ENCODE measurements at regions of chrX and their contacts with region 1.

Region 1: DNA sequence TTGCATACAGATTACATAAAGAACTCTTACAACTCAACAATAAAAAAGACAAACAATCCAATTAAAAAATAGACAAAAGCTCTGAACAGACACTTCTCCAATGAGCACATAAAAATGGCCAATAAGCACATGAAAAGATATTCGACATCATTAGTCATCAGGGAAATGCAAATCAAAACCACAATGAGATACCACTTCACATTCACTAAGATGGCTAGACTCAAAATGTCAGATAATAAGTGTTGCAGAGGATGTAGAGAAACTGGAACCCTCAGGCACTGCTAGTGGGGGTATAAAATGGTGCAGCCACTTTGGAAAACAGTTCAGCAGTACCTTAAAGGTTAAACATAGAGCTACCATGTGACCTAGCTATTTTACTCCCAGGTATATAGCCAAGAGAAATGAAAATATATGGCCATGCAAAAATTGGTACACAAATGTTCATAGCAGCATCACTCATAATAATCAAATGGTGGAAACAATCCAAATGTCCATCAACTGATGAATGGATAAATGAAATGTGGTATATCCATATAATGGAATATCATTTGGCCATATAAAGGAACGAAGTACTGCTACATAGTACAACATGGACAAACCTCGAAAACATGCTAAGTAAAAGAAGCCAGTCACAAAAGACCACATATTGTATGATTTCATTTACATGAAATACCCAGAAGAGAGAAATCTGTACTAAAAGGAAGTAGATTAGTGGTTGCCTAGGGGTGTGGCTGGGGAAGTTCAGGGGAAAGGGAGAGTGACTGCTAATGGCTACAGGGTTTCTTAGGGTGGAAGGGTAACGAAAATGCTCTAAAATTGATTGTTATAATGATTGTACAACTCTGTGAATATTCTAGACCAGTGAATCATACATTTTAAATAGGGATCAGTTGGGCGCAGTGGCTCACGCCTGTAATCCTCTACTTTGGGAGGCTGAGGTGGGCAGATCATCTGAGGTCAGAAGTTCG is 29.4 kb downstream of the SASH3 start:
- DNase-seq: no peak
- H3K4me3 ChIP-seq: no peak overlapping the region
- CTCF ChIP-seq: no peak

Region 2: GRCh38 chrX:129823115-129823514 is 14.0 kb after region 1 on chrX:
- CTCF ChIA-PET with region 1: interaction called, 10 read pairs
- POLR2A ChIA-PET with region 1: no interaction called
- DNase-seq: no peak
- H3K4me3 ChIP-seq: no peak overlapping the region
- CTCF ChIP-seq: peak; percentile 23

Region 3: DNA sequence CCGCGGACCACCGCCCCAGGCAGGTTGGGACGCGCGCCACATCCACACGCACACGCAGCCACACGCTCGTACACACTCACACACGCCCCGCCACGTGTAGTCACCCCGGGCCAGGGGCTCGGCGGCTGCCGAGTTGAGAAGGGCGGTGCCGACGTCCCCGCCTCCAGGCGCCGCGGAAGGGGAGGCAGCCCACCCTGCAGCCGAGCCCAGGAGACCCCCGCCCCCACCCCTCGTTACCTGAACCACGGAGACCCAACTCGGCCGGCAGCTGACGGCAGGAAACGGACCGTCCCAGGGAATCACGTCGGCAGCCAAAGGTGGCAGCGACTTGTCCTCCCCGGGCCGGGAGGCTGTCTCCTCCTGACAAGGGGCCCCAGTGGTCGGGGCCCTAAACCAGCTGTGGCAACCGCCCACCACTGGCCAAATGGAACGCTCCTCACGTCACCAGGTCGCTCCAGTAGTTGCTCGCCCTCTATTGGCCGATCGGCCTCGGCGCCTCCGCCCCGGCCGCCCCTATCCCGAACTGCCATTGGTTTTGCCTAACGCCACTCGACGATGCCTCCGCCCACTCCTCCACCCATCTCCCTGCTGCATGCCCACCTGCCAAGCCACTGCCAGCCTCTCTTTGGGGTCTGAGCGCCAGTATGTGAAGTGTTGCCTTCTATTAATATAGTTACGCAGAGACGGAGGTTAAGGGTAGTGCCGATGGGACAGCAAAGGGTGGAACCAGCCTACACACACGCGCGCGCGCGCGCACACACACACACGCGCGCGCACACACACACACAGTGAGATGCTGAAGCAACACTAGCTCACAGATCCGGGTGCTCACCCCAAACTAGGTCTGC is 34.6 kb after region 1 on chrX and contains the start of gene ZDHHC9:
- CTCF ChIA-PET with region 1: no interaction called
- POLR2A ChIA-PET with region 1: no interaction called
- DNase-seq: peak; percentile 37
- H3K4me3 ChIP-seq: peak within 1 kb of the TSS; percentile 72
- CTCF ChIP-seq: no peak

Region 4: DNA sequence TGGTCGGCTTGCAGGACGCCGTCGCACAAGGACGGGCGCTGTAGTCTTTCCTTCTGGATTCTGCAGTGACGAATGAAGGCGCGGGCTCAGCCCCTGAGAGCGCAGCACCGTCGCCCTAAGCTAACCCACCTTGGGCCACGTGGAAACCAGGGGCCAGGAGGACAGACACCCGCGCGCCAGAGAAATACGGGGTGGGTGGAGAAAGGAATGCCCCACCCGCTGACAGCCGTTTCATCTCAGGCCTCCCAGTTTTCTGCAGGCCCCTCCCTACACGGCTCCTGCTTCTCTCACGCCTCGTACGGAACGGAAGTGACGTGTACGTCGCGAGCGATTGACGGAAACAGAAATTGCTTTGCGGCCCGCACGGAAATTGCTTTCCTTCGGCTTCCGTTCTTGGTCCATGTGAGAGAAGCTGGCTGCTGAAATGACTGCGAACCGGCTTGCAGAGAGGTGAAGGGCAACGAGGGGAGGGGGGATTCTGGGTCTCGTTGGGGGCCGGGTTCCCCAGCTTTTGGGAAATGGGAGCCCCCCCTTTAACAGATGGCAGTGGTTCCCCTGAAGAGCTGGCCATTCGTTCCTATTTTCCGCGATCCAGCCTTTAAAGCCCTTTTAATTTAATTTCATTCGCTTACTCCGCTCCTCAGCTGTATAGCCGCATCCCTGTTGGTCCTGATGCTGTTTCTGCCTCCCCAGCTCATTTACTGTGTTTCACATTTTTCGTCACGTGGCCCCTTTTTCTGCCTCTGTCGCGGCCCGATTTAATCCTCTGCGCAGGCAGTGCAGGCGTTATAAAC is 96.9 kb after region 1 on chrX and contains the start of gene UTP14A:
- CTCF ChIA-PET with region 1: no interaction called
- POLR2A ChIA-PET with region 1: no interaction called
- DNase-seq: peak; percentile 29
- H3K4me3 ChIP-seq: peak within 1 kb of the TSS; percentile 69
- CTCF ChIP-seq: no peak